Activated CD8-positive, alpha-beta T cell treated with anti-CD3 and anti-CD28 coated beads for 36 hours (primary cell): ENCODE measurements at regions of chr2 and their contacts with region 1.

Region 1: DNA sequence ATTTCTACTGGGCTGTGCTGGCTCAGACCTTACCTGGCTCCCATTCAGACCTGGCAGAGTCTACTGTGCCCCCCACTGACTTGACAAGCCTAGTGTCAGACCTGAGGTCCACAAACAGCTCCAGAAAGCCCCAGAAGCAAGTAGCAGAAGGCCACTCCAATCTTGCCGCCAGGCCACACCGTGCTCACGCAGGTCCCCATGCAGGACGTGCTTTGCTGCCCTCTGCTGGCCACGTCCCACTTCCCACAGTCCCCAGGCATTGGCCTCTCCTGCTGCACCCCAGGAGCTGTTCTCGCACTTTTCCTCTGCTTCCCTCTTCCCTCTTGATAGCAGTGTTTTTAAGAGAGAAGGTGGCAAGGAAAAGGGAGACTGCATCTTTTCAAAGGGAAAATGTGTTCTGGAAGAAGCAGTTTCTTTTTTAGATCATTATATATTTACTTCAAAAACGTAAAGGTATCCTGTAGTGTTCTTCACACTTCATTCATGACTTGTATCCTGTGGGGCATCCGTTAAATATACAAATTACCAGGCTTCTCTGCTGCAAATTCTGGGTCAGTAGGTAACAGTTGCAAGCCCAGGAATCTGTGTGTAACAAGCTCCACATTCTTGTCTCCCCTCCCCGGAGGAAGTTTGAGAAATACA is 81.4 kb upstream of the PAPOLG start:
- DNase-seq: peak; percentile 93
- ATAC-seq: peak; percentile 100
- H3K4me3 Mint-ChIP-seq: no peak overlapping the region
- H3K27ac Mint-ChIP-seq: no peak overlapping the region
- H3K4me1 Mint-ChIP-seq: peaks cover 2% of the 10 kb centered on the region
- H3K27me3 Mint-ChIP-seq: no peaks in the 10 kb centered on the region
- CTCF ChIP-seq: peak; percentile 85

Region 2: DNA sequence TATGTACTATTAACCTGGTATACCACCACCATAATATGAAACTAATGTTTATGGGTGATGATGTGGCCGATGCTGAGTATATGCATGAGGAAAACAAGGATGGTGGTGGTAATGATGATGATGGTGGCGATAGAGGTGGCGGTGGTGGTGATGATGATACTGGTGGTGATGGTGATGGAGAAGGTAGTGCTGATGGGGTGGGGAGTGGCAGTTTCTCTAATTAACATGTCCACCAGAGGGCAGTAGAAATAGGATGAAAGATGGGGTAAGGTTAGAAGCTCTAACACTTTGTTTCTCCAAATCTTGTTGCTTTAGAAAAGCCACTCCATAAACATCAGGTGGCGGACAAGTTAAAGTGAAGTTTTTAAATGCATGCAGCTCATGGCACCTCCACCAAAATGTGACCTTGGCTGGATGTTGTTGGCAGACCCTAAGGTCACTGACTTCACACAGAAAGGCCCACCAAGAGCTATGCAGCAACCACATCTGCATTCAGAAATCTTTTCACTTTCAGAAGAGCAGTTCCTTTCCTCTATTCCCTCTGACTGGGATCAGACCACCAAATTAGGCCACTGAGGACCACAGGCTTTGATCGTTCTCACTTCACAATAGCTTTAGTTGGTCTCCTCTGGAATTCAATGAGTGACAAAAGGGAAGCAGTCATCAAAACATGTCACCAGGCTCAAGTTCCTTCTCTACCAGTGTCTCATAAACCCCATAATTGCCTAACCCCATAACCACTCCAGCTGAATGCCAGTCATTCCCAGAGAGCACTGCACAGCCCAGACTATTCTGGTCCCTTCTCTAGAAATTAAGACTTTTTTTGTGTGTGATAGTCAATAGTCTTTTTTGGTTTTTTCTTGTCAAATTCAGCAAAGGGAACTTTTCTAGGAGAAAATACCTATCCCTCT is 113.7 kb before region 1 on chr2:
- CTCF ChIA-PET with region 1: interaction called, 17 read pairs
- POLR2A ChIA-PET with region 1: no interaction called
- intact Hi-C with region 1: no loop called
- DNase-seq: peak; percentile 20
- ATAC-seq: peak; percentile 60
- H3K4me3 Mint-ChIP-seq: no peak overlapping the region
- H3K27ac Mint-ChIP-seq: no peak overlapping the region
- H3K4me1 Mint-ChIP-seq: peaks cover 12% of the 10 kb centered on the region
- H3K27me3 Mint-ChIP-seq: peaks cover 48% of the 10 kb centered on the region
- CTCF ChIP-seq: no peak

Region 3: GRCh38 chr2:60641811-60642788 is 32.5 kb before region 1 on chr2:
- CTCF ChIA-PET with region 1: interaction called, 15 read pairs
- POLR2A ChIA-PET with region 1: no interaction called
- intact Hi-C with region 1: no loop called
- DNase-seq: peak; percentile 56
- ATAC-seq: peak; percentile 65
- H3K4me3 Mint-ChIP-seq: no peak overlapping the region
- H3K27ac Mint-ChIP-seq: no peak overlapping the region
- H3K4me1 Mint-ChIP-seq: no peaks in the 10 kb centered on the region
- H3K27me3 Mint-ChIP-seq: peaks cover 2% of the 10 kb centered on the region
- CTCF ChIP-seq: peak; percentile 88

Region 4: DNA sequence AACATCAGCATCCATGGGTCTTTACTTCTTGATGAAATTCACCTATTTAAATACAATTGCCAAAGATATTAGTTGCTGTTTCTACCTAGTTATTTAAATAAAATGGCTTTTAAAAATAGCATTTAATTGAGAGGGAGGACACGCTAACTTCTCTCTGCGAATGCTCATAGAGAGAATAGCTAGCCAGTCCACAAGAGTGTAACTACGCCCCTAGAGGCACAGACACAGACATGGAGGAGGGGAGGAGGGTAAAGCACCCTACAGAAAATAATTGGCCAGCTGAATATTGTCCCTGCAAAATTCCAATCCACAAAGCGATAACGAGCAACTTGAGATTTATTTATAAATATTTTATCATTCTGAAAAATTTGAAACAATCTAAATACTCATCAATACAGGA is 15.6 kb before region 1 on chr2:
- CTCF ChIA-PET with region 1: interaction called, 39 read pairs
- POLR2A ChIA-PET with region 1: no interaction called
- intact Hi-C with region 1: no loop called
- DNase-seq: no peak
- ATAC-seq: no peak
- H3K4me3 Mint-ChIP-seq: no peak overlapping the region
- H3K27ac Mint-ChIP-seq: no peak overlapping the region
- H3K4me1 Mint-ChIP-seq: peaks cover 2% of the 10 kb centered on the region
- H3K27me3 Mint-ChIP-seq: peaks cover 3% of the 10 kb centered on the region
- CTCF ChIP-seq: no peak

Region 5: GRCh38 chr2:60707750-60708371 is 33.2 kb after region 1 on chr2:
- CTCF ChIA-PET with region 1: interaction called, 24 read pairs
- POLR2A ChIA-PET with region 1: no interaction called
- intact Hi-C with region 1: no loop called
- DNase-seq: no peak
- ATAC-seq: peak; percentile 55
- H3K4me3 Mint-ChIP-seq: no peak overlapping the region
- H3K27ac Mint-ChIP-seq: no peak overlapping the region
- H3K4me1 Mint-ChIP-seq: no peaks in the 10 kb centered on the region
- H3K27me3 Mint-ChIP-seq: no peaks in the 10 kb centered on the region
- CTCF ChIP-seq: peak; percentile 83